Caco-2 (cell line): ENCODE measurements at regions of chr4 and their contacts with region 1.

Region 1: DNA sequence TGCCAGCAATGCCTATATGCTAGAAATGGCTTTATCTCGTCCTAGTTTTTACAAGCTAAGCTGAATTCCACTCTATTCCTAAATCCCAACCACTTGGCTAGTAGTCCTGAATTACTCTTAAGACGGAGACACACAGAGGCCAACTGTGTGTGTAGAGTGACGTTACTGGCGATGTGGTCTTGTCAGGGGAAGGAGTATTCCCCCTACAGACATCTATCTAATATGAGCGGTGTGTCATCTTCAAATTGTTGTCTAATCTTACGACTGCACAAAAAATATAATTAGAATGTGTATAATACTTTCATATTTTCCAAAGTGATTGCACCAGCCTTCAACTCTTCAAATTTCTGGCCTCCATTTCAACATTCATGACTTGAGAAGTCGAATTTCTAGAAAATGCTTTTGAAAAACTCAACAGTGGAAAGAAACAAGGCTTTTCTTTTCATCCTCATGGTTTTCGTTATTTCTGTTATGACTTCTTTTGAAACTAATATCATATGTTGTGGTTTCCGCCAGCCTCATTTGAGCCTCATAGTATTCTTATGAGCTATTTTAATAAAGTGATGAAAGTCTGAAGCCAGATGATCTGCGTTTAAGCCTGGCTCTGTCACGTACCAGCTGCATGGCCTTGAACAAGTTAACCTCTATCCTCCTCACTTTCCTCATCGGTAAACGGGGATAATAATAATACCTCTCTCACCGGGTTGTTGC is 132.3 kb downstream of the SOWAHB start:
- DNase-seq: no peak
- H3K4me3 ChIP-seq: no peak overlapping the region
- H3K4me3 Mint-ChIP-seq: no peak overlapping the region
- H3K27ac Mint-ChIP-seq: no peak overlapping the region
- H3K4me1 ChIP-seq: peaks cover 42% of the 10 kb centered on the region
- H3K4me1 Mint-ChIP-seq: peaks cover 31% of the 10 kb centered on the region
- H3K27me3 ChIP-seq: no peaks in the 10 kb centered on the region
- H3K27me3 Mint-ChIP-seq: no peaks in the 10 kb centered on the region
- CTCF ChIP-seq: no peak

Region 2: DNA sequence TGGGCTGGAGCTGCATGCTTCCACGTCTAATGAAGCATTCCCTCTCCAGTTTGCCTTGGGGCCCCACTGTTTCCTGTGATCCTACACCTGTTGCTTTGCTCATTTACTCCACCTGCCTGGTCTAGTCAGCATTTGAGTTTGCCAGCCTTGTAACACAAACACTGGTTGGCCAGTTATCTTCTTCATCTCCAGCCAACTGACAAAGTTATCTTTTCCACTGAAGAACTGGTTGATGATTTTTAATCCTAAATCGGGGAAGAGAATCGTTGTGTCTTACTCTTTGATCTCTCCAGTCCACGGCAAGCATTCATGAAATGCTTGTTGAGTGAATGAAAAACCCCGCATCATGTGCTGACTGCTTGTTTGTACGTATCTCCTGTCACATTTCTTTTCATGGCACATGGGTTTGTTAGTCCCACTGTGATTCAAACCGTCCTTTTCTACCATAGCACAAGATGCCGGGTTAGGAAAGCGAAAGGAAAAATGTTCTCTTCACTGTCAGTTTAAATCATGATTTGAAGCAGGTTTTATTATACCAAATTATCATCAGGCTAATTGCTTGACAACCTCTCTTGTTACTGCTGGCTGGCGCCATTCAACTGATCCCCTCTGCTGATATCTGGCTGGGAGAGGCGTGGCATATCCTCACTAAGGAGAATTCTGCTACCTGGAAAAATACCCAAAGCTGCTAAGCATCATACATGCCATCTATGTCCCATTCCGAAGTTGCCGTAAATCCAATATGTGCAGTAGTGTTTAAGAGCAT is 185.8 kb before region 1 on chr4:
- CTCF ChIA-PET with region 1: no interaction called
- POLR2A ChIA-PET with region 1: no interaction called
- intact Hi-C with region 1: no loop called
- DNase-seq: peak; percentile 40 to 56
- H3K4me3 ChIP-seq: no peak overlapping the region
- H3K4me3 Mint-ChIP-seq: peak overlapping the region; percentile 21
- H3K27ac Mint-ChIP-seq: no peak overlapping the region
- H3K4me1 ChIP-seq: no peaks in the 10 kb centered on the region
- H3K4me1 Mint-ChIP-seq: peaks cover 16% of the 10 kb centered on the region
- H3K27me3 ChIP-seq: no peaks in the 10 kb centered on the region
- H3K27me3 Mint-ChIP-seq: no peaks in the 10 kb centered on the region
- CTCF ChIP-seq: no peak

Region 3: DNA sequence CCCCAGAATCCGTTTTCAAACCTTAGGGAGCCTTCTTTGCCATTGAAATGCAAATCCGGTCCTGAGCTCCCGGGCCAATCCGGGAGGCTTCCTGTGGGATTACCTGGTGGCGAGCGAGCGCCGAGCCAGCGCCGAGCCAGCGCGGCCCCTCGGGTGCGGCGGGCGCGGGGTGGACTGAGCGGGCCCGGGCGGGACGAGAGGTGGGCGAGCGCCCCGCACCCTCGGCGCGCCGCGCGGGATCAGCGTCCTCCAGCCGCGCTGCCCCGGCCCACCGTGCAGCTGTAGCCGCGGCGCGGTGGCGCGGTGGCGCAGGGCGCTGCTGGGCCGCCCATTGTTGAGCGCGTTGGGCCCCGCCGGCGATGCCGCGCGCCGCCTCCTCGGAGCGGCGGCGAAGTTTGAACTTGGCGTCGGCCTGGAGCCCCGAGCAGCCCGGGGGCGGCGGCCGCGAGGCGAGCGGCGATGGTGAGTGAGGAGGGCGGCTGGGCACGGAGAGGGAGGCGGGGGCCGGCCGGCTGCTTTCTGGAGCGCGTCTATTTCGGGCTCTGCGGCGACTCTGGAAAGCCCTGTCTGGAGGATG is 76.3 kb before region 1 on chr4:
- CTCF ChIA-PET with region 1: no interaction called
- POLR2A ChIA-PET with region 1: no interaction called
- intact Hi-C with region 1: no loop called
- DNase-seq: peak; percentile 51 to 67
- H3K4me3 ChIP-seq: peak overlapping the region; percentile 65
- H3K4me3 Mint-ChIP-seq: peak overlapping the region; percentile 78
- H3K27ac Mint-ChIP-seq: peak overlapping the region; percentile 81
- H3K4me1 ChIP-seq: peaks cover 40% of the 10 kb centered on the region
- H3K4me1 Mint-ChIP-seq: peaks cover 13% of the 10 kb centered on the region
- H3K27me3 ChIP-seq: no peaks in the 10 kb centered on the region
- H3K27me3 Mint-ChIP-seq: no peaks in the 10 kb centered on the region
- CTCF ChIP-seq: no peak

Region 4: DNA sequence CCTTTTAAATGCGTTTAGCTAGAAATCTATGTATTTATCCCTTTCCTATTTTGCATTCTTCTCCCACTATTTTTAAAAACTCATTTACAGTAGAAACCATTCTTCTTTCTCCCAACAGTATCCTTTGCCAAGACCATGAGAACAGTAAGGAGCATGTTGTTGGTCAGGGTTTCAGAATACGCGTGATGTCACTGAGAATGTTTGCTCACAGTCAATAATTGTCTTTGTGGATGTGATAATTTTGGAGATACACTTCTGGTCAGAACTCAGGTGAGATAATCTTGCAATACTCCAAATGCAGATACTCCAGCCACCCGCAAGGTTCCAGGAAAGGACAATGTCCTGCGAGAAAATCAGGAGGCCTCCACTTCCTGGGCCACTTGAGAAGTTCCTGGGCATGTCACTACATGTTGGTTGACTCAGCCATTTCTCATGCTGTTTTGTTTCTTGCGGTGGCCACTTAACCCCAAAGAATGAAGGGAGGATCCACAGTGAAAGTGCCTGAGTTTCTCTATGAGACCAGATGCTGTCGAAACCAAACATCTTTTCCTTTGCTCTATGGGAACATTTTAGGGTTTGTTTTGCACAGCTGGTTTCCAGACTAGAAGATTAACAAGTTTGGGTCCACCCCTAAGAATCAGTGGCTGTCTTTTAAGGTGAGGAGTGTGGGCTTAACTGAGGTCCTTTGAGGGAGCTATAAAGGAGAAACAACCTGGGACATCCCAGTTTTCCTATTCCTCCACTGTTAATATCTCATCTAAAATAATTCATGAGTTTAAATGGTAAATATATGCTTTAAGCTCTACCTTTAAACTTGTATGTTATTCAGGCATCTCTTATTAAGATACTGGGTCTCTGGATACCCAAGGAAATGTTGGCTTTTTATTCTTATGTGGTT is 16.3 kb after region 1 on chr4:
- CTCF ChIA-PET with region 1: no interaction called
- POLR2A ChIA-PET with region 1: no interaction called
- intact Hi-C with region 1: loop called (anchors 1 kb)
- DNase-seq: peak; percentile 56 to 83
- H3K4me3 ChIP-seq: no peak overlapping the region
- H3K4me3 Mint-ChIP-seq: peak overlapping the region; percentile 9
- H3K27ac Mint-ChIP-seq: peak overlapping the region; percentile 77
- H3K4me1 ChIP-seq: peaks cover 22% of the 10 kb centered on the region
- H3K4me1 Mint-ChIP-seq: peaks cover 13% of the 10 kb centered on the region
- H3K27me3 ChIP-seq: no peaks in the 10 kb centered on the region
- H3K27me3 Mint-ChIP-seq: no peaks in the 10 kb centered on the region
- CTCF ChIP-seq: no peak

Region 5: GRCh38 chr4:76856243-76857073 is 90.8 kb after region 1 on chr4:
- CTCF ChIA-PET with region 1: no interaction called
- POLR2A ChIA-PET with region 1: no interaction called
- intact Hi-C with region 1: no loop called
- DNase-seq: peak; percentile 77 to 79
- H3K4me3 ChIP-seq: no peak overlapping the region
- H3K4me3 Mint-ChIP-seq: peak overlapping the region; percentile 24
- H3K27ac Mint-ChIP-seq: peak overlapping the region; percentile 25
- H3K4me1 ChIP-seq: peaks cover 21% of the 10 kb centered on the region
- H3K4me1 Mint-ChIP-seq: peaks cover 30% of the 10 kb centered on the region
- H3K27me3 ChIP-seq: no peaks in the 10 kb centered on the region
- H3K27me3 Mint-ChIP-seq: no peaks in the 10 kb centered on the region
- CTCF ChIP-seq: no peak

Region 6: GRCh38 chr4:76949276-76950051 is 183.8 kb after region 1 on chr4 and contains the start of gene SEPTIN11:
- CTCF ChIA-PET with region 1: no interaction called
- POLR2A ChIA-PET with region 1: no interaction called
- intact Hi-C with region 1: loop called (anchors 1 kb)
- DNase-seq: peak; percentile 94 to 95
- H3K4me3 ChIP-seq: peak within 1 kb of the TSS; percentile 94
- H3K4me3 Mint-ChIP-seq: peak within 1 kb of the TSS; percentile 100
- H3K27ac Mint-ChIP-seq: peak within 1 kb of the TSS; percentile 97
- H3K4me1 ChIP-seq: peaks cover 5% of the 10 kb centered on the region; the same call in 1 of the 2 replicates
- H3K4me1 Mint-ChIP-seq: peaks cover 12% of the 10 kb centered on the region
- H3K27me3 ChIP-seq: no peaks in the 10 kb centered on the region
- H3K27me3 Mint-ChIP-seq: no peaks in the 10 kb centered on the region
- CTCF ChIP-seq: no peak
- total RNA-seq, gene SEPTIN11: 119 and 127 TPM in 2 replicates

Region 7: GRCh38 chr4:77044461-77045150 is 279.0 kb after region 1 on chr4:
- CTCF ChIA-PET with region 1: no interaction called
- POLR2A ChIA-PET with region 1: no interaction called
- intact Hi-C with region 1: loop called (anchors 10 kb)
- DNase-seq: peak in 1 of 2 experiments; percentile 29
- H3K4me3 ChIP-seq: no peak overlapping the region
- H3K4me3 Mint-ChIP-seq: peak overlapping the region; percentile 18
- H3K27ac Mint-ChIP-seq: peak overlapping the region; percentile 67
- H3K4me1 ChIP-seq: peaks cover 51% of the 10 kb centered on the region
- H3K4me1 Mint-ChIP-seq: peaks cover 18% of the 10 kb centered on the region
- H3K27me3 ChIP-seq: no peaks in the 10 kb centered on the region
- H3K27me3 Mint-ChIP-seq: no peaks in the 10 kb centered on the region
- CTCF ChIP-seq: peak in 1 of 2 experiments; percentile 54

Region 8: GRCh38 chr4:77332696-77333270 is 567.2 kb after region 1 on chr4:
- CTCF ChIA-PET with region 1: no interaction called
- POLR2A ChIA-PET with region 1: no interaction called
- intact Hi-C with region 1: no loop called
- DNase-seq: no peak
- H3K4me3 ChIP-seq: no peak overlapping the region
- H3K4me3 Mint-ChIP-seq: no peak overlapping the region
- H3K27ac Mint-ChIP-seq: no peak overlapping the region
- H3K4me1 ChIP-seq: no peaks in the 10 kb centered on the region
- H3K4me1 Mint-ChIP-seq: no peaks in the 10 kb centered on the region
- H3K27me3 ChIP-seq: no peaks in the 10 kb centered on the region
- H3K27me3 Mint-ChIP-seq: no peaks in the 10 kb centered on the region
- CTCF ChIP-seq: no peak